Prostate gland (tissue), 2 donors: ENCODE measurements at regions of chr21 and their contacts with region 1.

Region 1: DNA sequence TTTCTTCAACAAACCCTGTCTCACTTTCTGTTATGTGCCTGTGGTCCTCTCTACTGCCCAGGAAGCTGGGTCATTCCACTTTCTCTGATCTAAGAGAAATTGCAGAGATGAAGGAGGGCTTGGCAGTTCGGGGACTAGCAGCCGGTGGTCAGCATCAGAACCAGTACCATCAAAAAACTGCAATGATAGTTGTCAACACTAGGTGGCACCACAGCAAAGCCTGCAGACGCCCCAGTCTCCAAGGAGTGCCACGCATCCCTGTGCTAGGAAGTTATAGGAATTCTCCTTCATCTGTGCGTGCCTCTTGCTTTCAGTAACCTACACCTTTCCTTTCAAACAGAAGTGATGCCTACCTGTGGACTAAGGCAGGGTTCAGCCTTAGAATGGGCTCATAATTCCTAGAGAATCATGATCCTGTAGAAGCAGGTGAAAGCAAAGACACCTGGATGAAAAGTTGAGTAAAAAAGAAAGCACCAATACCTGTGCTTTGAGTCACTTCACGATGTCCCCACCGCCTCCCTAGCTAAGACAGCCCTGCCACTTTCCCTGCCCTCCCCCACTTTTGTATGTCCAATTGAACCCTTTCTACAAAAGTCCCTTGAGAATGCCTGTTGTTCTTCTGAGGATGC is 129.2 kb downstream of the ADAMTS1 start:
- DNase-seq: peak; percentile 8
- H3K4me3 ChIP-seq: no peak overlapping the region
- H3K27ac ChIP-seq: no peak overlapping the region
- H3K4me1 ChIP-seq: no peaks in the 10 kb centered on the region
- H3K27me3 ChIP-seq: no peaks in the 10 kb centered on the region
- CTCF ChIP-seq: peak in 3 of 4 experiments; percentile 36 to 53 (median 50)
- POLR2A ChIP-seq: no peak

Region 2: DNA sequence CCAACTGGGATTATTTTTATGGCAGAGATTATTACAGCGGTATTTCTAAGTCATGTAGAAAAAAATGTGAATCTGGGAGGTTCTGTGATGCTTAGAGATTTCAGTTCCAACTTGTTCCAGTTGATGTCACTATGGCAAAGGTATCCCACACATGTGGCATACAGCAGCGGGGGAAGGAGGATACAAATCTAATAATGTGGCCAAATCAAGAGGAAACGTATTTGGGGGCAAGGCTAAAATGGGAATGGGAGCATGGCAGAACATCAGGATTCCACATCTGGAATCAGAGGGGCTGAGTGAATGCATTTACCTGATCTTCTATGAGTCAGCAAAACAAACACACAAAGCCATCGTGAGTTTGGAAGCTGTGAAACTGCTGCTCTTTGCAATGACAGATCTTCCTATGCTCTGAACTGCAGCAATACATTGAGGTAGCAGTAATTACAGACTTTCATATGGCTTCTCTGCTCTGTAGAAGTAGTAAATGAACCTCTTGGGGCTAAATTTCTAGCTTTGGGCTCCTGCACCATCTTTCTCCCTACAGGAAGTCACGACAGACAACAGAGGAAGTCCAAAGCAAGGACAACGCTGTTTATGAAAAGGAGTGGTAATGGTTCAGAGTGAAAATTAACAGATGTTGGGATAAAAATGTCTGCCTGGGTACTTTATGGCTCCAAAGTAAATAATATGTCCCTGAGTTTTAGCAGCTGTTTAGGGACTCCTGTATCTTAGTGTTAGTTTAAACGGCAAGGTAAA is 925.7 kb before region 1 on chr21:
- intact Hi-C with region 1: loop called (anchors 10 kb)
- DNase-seq: no peak
- H3K4me3 ChIP-seq: peak overlapping the region; percentile 11 to 15
- H3K27ac ChIP-seq: peak overlapping the region in 1 of 2 donors; percentile 27
- H3K4me1 ChIP-seq: no peaks in the 10 kb centered on the region
- H3K27me3 ChIP-seq: no peaks in the 10 kb centered on the region
- CTCF ChIP-seq: peak in 2 of 4 experiments; percentile 15 to 41
- POLR2A ChIP-seq: no peak

Region 3: DNA sequence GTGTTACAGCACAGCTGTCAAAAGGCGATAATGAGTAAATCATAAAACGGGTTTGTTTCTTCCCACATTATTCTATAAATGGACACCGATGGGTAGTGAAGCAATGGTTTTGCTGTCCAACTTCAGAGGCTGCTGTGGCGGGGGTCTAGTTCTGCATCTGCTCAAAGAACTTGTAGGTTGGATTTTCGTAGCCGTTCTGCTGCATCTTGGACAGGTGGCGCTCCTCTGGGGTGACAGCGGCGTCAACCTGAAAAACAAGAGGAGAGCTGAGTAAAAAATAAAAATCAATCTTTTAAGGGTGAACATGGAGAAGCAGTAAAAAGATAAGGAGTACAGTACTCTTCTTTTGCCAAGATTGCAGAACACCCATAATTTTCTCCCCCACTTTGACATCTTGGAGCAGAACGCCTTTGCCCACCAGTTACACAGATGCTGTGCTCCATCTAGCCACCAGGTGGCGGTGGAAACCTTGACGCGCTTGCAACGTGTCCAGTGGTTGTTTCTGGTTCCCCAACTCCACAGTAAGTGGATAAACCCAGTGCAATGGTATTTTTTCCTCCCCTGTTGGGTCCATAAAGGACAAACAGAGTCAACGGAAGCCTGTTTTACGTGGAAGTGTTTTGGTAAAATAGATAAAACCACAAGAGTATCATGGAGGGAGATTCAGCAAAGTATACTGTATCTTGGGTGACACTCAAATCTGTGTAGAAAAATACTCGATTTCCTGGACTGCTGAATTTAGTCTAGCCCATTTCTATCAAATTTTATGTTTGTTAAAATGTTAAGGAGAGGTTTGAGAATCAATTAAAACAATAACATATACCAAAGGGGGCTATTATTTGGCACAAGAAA is 834.2 kb before region 1 on chr21:
- intact Hi-C with region 1: loop called (anchors 5 kb)
- DNase-seq: peak; percentile 38
- H3K4me3 ChIP-seq: no peak overlapping the region
- H3K27ac ChIP-seq: no peak overlapping the region
- H3K4me1 ChIP-seq: no peaks in the 10 kb centered on the region
- H3K27me3 ChIP-seq: no peaks in the 10 kb centered on the region
- CTCF ChIP-seq: peak; percentile 86 to 88 (median 86)
- POLR2A ChIP-seq: no peak

Region 4: GRCh38 chr21:25895565-25896205 is 820.3 kb before region 1 on chr21:
- intact Hi-C with region 1: loop called (anchors 5 kb)
- DNase-seq: no peak
- H3K4me3 ChIP-seq: no peak overlapping the region
- H3K27ac ChIP-seq: no peak overlapping the region
- H3K4me1 ChIP-seq: no peaks in the 10 kb centered on the region
- H3K27me3 ChIP-seq: no peaks in the 10 kb centered on the region
- CTCF ChIP-seq: peak; percentile 30 to 59 (median 50)
- POLR2A ChIP-seq: no peak

Region 5: GRCh38 chr21:26425576-26425975 is 290.4 kb before region 1 on chr21:
- intact Hi-C with region 1: no loop called
- DNase-seq: no peak
- H3K4me3 ChIP-seq: no peak overlapping the region
- H3K27ac ChIP-seq: no peak overlapping the region
- H3K4me1 ChIP-seq: no peaks in the 10 kb centered on the region
- H3K27me3 ChIP-seq: no peaks in the 10 kb centered on the region
- CTCF ChIP-seq: no peak
- POLR2A ChIP-seq: no peak

Region 6: DNA sequence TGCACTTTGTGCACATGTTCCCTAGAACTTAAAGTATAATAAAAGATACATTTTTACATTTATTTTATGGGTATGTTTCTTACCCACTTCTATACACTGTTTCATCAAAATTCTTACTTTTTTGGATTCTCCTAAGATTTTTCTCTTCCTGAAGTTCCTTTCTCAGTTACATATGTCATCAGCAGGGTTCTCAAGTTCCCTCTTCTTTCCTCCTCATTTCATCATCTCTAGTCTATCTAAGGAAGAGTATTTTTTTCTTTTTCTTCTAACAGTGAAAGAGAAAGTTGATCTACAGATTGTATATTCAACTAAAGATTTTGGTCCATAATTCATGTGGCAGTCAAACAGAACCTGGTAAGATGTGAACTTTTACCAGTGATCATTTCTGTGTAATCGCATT is 101.7 kb before region 1 on chr21:
- intact Hi-C with region 1: no loop called
- DNase-seq: no peak
- H3K4me3 ChIP-seq: no peak overlapping the region
- H3K27ac ChIP-seq: no peak overlapping the region
- H3K4me1 ChIP-seq: no peaks in the 10 kb centered on the region
- H3K27me3 ChIP-seq: no peaks in the 10 kb centered on the region
- CTCF ChIP-seq: no peak
- POLR2A ChIP-seq: no peak

Region 7: DNA sequence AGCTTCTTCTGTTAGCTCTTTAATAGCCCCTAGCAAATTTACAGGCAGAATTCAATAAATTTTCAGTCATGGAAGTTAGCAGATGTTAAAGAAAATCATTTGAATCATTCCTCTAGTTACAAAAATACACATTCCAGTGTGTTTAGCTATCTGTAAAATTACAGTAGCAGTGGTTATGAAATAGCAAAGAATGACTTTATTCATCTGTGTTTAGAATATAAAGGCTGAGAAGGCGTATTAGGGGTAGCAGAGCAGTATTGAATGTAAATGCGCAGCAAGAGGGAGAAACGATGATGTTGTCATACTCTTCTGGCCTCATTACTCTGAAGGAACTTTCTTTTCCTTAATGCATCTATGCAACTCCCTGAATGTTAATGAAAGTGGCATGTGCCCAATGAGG is 36.7 kb before region 1 on chr21:
- intact Hi-C with region 1: no loop called
- DNase-seq: no peak
- H3K4me3 ChIP-seq: no peak overlapping the region
- H3K27ac ChIP-seq: no peak overlapping the region
- H3K4me1 ChIP-seq: no peaks in the 10 kb centered on the region
- H3K27me3 ChIP-seq: no peaks in the 10 kb centered on the region
- CTCF ChIP-seq: no peak
- POLR2A ChIP-seq: no peak